Activated CD8-positive, alpha-beta memory T cell treated with anti-CD3 and anti-CD28 coated beads, Interleukin-2, amount 10 ng/mL, durations not matched to agents 7 days and 5 days (primary cell): ENCODE measurements at regions of chr12 and their contacts with region 1.

Region 1: GRCh38 chr12:53205747-53206419 is 1.2 kb downstream of the ITGB7 start:
- DNase-seq: peak; percentile 96
- ATAC-seq: peak; percentile 71
- H3K4me3 Mint-ChIP-seq: peak overlapping the region; percentile 91
- H3K27ac Mint-ChIP-seq: peak overlapping the region; percentile 89
- H3K4me1 Mint-ChIP-seq: peaks cover 75% of the 10 kb centered on the region
- H3K27me3 Mint-ChIP-seq: no peaks in the 10 kb centered on the region

Region 2: DNA sequence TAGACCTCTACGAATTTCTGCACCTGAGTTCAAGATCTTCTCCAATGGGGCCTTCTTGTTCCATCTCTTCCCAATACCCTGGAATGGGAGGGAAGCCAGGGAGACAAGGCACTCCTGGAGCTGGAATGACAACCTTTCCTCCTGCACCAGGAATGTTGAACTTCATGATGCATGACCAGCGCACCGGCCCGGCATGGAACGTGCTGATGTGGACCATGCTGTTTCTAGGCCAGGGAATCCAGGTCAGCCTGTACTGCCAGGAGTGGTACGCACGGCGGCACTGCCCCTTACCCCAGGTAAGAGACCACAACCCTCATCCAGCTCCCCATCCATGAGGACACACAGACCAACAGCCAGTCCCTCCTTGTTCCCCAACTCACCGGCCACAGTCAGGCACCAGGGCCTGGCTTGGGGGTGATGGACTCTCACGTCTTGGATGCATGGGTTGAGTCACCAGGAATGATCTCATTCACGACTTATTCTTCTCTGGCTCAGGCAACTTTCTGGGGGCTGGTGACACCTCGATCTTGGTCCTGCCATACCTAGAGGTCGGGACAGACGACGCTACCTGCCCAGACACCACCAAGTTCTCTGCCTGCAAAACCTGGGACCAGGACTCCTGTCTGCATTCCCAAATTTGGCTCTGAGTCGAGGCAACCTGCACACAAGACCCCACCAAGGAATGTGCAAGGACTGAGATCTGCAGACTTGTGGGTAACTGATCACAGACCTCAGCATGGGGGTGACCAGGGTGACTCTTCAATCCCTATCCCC is 82.1 kb before region 1 on chr12:
- CTCF ChIA-PET with region 1: no interaction called
- DNase-seq: no peak
- ATAC-seq: no peak
- H3K4me3 Mint-ChIP-seq: no peak overlapping the region
- H3K27ac Mint-ChIP-seq: no peak overlapping the region
- H3K4me1 Mint-ChIP-seq: no peaks in the 10 kb centered on the region
- H3K27me3 Mint-ChIP-seq: no peaks in the 10 kb centered on the region

Region 3: GRCh38 chr12:53190108-53190729 is 15.7 kb before region 1 on chr12:
- CTCF ChIA-PET with region 1: interaction called, 67 read pairs
- DNase-seq: peak; percentile 59
- ATAC-seq: peak; percentile 79
- H3K4me3 Mint-ChIP-seq: no peak overlapping the region
- H3K27ac Mint-ChIP-seq: no peak overlapping the region
- H3K4me1 Mint-ChIP-seq: peaks cover 21% of the 10 kb centered on the region
- H3K27me3 Mint-ChIP-seq: no peaks in the 10 kb centered on the region